Naive thymus-derived CD8-positive, alpha-beta T cell (primary cell): ENCODE measurements at regions of chr1 and their contacts with region 1.

Region 1: DNA sequence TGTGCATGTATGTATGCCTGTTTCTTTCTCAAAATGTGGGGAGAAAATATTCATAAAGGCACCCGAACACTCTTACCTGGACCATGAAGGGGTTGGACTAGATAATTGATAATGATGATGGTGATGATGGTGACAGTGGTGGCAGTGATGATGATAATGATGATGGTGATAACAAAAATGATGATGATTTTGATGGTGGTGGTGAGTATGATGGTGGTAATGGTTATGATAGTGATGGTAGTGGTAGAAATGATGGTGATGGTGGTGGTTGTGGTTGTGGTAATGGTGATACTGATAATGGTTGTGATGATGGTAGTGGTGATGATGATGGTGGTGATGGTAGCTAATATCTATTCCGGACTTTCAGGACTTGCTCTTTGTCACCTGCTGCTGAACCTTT is 645.2 kb downstream of the NPHP4 start:
- DNase-seq: no peak
- ATAC-seq: no peak
- H3K4me3 Mint-ChIP-seq: peak overlapping the region in 1 of 10 donors; percentile 9
- H3K27ac Mint-ChIP-seq: peak overlapping the region in 2 of 10 donors; percentile 1 to 56
- H3K4me1 Mint-ChIP-seq: peaks cover 12 to 31% (median 23%) of the 10 kb centered on the region in 4 donors
- H3K27me3 Mint-ChIP-seq: peaks cover 0 to 1% (median 0%) of the 10 kb centered on the region in 5 donors

Region 2: GRCh38 chr1:4745560-4745959 is 601.5 kb before region 1 on chr1:
- POLR2A ChIA-PET with region 1: no interaction called
- DNase-seq: no peak
- ATAC-seq: no peak
- H3K4me3 Mint-ChIP-seq: no peak overlapping the region
- H3K27ac Mint-ChIP-seq: no peak overlapping the region
- H3K4me1 Mint-ChIP-seq: no peaks in the 10 kb centered on the region
- H3K27me3 Mint-ChIP-seq: peaks cover 0 to 7% (median 0%) of the 10 kb centered on the region in 5 donors

Region 3: DNA sequence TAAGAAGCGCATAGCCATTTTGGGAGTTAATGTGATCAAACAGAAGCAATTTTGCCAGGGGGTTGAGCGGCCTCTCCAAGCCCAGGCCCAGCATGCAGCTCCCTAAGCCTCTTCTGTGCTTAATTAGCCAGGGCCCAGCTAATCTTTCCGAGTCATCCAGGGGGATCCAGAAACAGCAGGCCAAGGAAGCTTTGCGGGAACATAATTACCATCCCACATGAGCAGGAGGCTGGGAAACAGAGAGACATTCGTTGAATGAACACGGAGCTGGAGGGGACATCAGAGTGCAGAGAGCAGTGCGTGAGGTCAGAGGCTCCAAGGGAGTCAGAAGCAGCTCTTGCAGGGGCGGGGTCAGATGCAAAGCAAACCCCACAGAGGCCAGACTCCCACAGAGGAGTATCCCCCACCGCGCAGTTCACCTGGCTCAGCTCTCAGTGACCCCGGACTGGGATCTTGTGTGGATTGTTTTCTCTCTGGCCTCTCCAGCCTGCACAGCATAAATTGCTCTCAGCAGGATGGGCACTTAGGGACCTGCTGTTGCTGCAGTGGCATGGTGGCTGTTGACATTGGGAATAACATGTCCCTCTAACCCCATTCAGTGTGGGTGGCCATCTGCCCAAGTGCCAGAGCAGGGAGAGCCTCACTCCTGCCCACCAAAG is 35.3 kb before region 1 on chr1:
- POLR2A ChIA-PET with region 1: interaction called, 12 read pairs
- DNase-seq: no peak
- ATAC-seq: no peak
- H3K4me3 Mint-ChIP-seq: no peak overlapping the region
- H3K27ac Mint-ChIP-seq: peak overlapping the region in 2 of 10 donors; percentile 80 to 81
- H3K4me1 Mint-ChIP-seq: peaks cover 4 to 47% (median 14%) of the 10 kb centered on the region in 4 donors
- H3K27me3 Mint-ChIP-seq: peaks cover 0 to 2% (median 0%) of the 10 kb centered on the region in 5 donors

Region 4: GRCh38 chr1:5324883-5325282 is 22.2 kb before region 1 on chr1:
- POLR2A ChIA-PET with region 1: no interaction called
- DNase-seq: no peak
- ATAC-seq: no peak
- H3K4me3 Mint-ChIP-seq: no peak overlapping the region
- H3K27ac Mint-ChIP-seq: peak overlapping the region in 4 of 10 donors; percentile 2 to 48 (median 20)
- H3K4me1 Mint-ChIP-seq: peaks cover 21 to 49% (median 36%) of the 10 kb centered on the region in 4 donors
- H3K27me3 Mint-ChIP-seq: no peaks in the 10 kb centered on the region

Region 5: DNA sequence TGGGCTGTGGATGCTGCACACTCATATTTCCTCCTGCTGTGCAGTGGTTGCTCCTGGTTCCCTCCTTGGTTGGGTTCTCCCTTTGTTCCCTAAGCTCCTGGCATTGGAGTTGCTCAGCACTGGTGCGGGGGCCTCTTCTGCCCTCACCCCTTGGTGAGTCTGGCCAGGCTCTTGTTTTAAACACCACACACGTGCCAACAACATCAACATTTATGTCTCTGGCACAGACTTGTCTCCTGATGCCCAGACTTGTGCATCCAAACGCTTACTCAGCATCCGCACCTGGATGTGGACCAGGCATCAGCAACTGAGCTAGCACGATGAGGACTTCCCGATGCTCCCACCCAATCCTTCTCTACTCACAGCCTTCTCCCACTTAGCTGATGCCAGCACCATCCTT is 17.5 kb after region 1 on chr1:
- POLR2A ChIA-PET with region 1: no interaction called
- DNase-seq: no peak
- ATAC-seq: no peak
- H3K4me3 Mint-ChIP-seq: no peak overlapping the region
- H3K27ac Mint-ChIP-seq: peak overlapping the region in 1 of 10 donors; percentile 8
- H3K4me1 Mint-ChIP-seq: peaks cover 0 to 39% (median 11%) of the 10 kb centered on the region in 4 donors
- H3K27me3 Mint-ChIP-seq: peaks cover 0 to 2% (median 0%) of the 10 kb centered on the region in 5 donors

Region 6: GRCh38 chr1:5379176-5379759 is 32.2 kb after region 1 on chr1:
- POLR2A ChIA-PET with region 1: no interaction called
- DNase-seq: no peak
- ATAC-seq: no peak
- H3K4me3 Mint-ChIP-seq: no peak overlapping the region
- H3K27ac Mint-ChIP-seq: no peak overlapping the region
- H3K4me1 Mint-ChIP-seq: peaks cover 0 to 37% (median 10%) of the 10 kb centered on the region in 4 donors
- H3K27me3 Mint-ChIP-seq: no peaks in the 10 kb centered on the region